ENCODE measurements at regions of chr14 and their contacts with region 1.

Region 1: DNA sequence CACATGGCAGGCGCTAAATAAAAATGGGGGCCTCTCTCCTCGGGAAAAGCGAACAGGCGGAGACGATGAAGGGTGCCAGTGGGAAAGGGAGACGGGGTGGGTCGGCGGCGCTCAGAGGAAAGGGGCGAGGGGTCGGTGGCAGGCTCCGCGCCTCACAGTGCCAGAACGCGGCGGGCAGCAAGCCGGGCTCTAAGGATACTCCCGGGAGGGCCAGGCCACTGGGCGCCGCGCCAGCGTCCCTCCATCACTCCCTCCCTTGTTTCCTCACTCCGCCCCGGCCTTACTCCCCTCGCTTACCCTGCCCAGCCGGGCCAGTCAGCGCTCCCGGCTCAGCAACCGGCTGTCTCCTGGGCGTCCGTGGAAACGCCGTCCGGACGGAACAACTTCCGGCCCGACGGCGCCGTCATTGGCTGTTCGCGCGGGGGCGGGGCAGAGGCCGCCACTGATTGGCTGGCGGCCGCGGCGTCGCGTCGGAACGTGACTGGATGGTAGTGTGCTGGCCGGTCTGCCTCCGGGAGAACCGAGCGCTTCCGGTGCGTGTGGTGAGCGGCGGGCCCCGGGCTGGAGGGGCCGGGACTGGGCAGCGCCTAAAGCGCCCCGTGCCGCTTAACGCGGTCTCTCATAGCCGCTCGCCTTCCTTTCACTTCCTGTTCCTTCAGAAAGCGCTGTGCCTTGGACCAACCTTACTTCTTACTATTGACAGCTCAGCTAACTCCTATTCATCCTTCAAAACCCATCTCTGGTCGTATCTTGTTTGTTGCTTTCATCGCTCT is 53.0 kb downstream of the SLC25A47 start:
- DNase-seq: peak; percentile 96
- H3K4me3 Mint-ChIP-seq: peak within 1 kb of the TSS; percentile 98
- H3K27ac Mint-ChIP-seq: peak within 1 kb of the TSS; percentile 100
- H3K4me1 Mint-ChIP-seq: peaks cover 47% of the 10 kb centered on the region
- H3K27me3 Mint-ChIP-seq: peaks cover 1% of the 10 kb centered on the region

Region 2: DNA sequence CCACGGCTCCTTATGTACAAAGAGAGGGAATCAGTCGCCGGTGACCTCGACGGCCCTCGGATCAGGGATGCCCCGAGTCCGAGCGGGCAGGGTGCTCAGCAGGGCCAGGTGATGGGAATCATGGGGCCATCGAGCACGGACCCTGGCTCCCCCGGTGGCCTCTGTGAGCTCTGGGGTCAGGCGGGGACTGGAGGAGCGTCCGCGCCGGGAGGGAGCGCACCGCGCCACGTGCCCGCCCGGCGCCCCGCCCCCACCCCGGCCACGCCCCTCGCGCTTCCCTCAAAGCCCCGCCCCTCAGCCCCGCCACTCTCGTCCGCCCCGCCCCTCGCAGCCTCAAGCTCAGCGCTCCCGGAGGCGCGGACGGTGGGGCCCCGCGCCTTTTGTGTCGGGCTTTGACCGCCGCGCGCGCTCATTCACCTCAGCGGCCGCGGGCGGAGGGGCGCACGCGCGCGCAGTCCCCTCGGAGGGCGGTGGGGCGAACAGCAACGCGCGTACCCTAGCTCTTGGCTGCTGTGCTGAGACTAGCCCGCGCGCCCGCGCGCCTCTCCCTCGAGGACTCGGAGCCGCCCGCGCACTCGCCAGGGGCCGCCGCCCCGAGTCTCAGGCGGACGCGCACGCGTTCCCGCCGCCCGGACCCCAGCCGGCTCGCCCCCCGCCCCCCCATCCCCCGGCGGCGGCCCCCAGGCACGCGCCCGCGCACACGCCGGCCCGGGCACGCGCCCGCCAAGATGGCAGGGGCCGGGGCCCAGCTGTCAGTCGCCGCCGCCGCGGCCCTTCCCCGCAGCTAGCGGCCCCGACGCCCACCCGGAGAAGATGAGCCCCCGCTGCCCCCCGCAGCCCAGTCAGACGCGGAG is 404.8 kb before region 1 on chr14:
- CTCF ChIA-PET with region 1: no interaction called
- POLR2A ChIA-PET with region 1: interaction called, 3 read pairs
- intact Hi-C with region 1: loop called (anchors 10 kb)
- DNase-seq: peak; percentile 89
- H3K4me3 Mint-ChIP-seq: peak overlapping the region; percentile 51
- H3K27ac Mint-ChIP-seq: no peak overlapping the region
- H3K4me1 Mint-ChIP-seq: peaks cover 20% of the 10 kb centered on the region
- H3K27me3 Mint-ChIP-seq: peaks cover 24% of the 10 kb centered on the region

Region 3: DNA sequence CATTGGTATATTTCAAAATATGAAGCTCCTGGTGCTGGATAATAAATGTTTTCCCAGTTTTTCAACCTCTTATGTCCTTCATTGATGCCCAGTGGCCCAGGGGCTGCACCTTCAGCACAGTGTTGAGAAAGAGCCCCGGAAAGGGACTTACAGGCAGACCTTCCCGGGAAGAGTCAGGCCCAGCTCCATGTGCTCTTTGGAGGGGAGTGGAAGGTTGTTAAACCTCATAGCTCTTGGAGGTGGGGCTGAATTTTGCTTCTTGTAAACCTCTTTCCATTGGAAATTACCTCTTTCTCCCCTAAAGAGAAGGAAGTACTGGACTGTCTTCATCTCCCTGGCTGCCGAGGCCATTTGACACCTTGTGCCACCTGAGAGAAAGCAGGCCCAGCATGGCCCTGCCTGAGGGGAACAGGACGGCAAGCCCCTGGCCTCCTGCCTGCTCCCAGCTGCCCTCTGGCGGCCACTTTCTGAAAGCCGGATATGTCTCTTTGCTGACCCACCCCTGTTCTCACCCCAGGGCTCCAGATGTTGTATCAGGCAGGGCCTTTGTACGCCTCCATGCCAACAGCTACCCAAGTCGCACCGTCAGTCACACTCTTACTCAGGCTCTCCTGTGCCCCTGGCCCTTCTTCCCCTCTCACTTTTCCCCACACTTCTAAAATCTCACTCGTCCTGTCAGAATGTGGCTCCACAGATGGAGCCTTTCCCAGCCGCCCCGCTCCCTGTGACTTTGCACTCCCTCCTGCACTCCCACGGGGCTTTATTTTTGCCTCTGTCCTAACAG is 267.9 kb before region 1 on chr14:
- CTCF ChIA-PET with region 1: interaction called, 3 read pairs
- POLR2A ChIA-PET with region 1: no interaction called
- intact Hi-C with region 1: loop called (anchors 5 kb)
- DNase-seq: peak; percentile 92
- H3K4me3 Mint-ChIP-seq: peak overlapping the region; percentile 4
- H3K27ac Mint-ChIP-seq: peak overlapping the region; percentile 90
- H3K4me1 Mint-ChIP-seq: peaks cover 62% of the 10 kb centered on the region
- H3K27me3 Mint-ChIP-seq: no peaks in the 10 kb centered on the region

Region 4: GRCh38 chr14:100306420-100307219 is 69.5 kb before region 1 on chr14 and contains the start of gene SLC25A29:
- CTCF ChIA-PET with region 1: interaction called, 14 read pairs
- POLR2A ChIA-PET with region 1: no interaction called
- intact Hi-C with region 1: loop called (anchors 1 kb)
- DNase-seq: peak; percentile 79
- H3K4me3 Mint-ChIP-seq: peak within 1 kb of the TSS; percentile 70
- H3K27ac Mint-ChIP-seq: no peak within 1 kb of the TSS
- H3K4me1 Mint-ChIP-seq: peaks cover 10% of the 10 kb centered on the region
- H3K27me3 Mint-ChIP-seq: peaks cover 6% of the 10 kb centered on the region
- total RNA-seq, gene SLC25A29: 14.9 to 15.7 TPM

Region 5: GRCh38 chr14:100402631-100403030 is 26.5 kb after region 1 on chr14:
- CTCF ChIA-PET with region 1: no interaction called
- POLR2A ChIA-PET with region 1: no interaction called
- intact Hi-C with region 1: no loop called
- DNase-seq: no peak
- H3K4me3 Mint-ChIP-seq: no peak overlapping the region
- H3K27ac Mint-ChIP-seq: no peak overlapping the region
- H3K4me1 Mint-ChIP-seq: peaks cover 27% of the 10 kb centered on the region
- H3K27me3 Mint-ChIP-seq: no peaks in the 10 kb centered on the region

Region 6: GRCh38 chr14:100446572-100446971 is 70.4 kb after region 1 on chr14:
- CTCF ChIA-PET with region 1: no interaction called
- POLR2A ChIA-PET with region 1: no interaction called
- intact Hi-C with region 1: no loop called
- DNase-seq: peak; percentile 52
- H3K4me3 Mint-ChIP-seq: no peak overlapping the region
- H3K27ac Mint-ChIP-seq: no peak overlapping the region
- H3K4me1 Mint-ChIP-seq: peaks cover 11% of the 10 kb centered on the region
- H3K27me3 Mint-ChIP-seq: no peaks in the 10 kb centered on the region

Region 7: DNA sequence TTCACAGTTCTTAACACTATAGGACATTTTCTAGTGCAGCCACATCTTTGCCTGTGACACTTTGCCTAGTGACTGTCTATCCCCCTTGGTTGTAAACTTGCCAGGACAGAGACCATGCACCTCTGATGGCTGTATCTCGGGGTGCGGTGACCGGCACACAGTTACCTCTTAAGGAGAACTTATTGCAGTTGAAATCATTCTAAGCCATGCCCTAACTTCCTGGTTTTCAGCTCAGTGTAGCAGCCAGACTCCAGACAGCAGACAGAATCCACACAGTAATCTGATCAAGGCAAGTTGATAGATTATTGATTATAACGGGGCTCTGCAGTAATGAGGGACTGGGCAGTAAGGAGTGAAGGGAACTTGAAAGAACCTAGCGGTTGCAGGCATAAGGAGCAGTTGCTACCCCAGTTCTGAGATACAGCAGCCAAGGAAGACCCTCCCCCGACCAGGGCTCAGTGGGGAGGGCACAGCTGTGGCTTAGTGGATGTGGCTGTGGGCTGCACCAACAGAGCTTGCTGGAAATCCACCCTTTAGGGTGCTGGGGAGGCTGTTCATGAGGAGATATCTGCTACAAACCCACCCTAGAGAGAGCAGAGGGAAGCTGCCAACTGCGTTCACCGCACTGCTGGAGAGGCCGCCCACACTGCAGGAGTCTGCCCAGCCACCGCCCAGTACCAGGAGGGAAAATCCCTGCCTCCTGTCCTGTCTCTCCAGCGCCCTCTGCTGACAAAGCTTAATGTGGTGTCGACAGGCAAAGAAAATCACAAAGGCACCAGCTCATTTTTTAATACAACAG is 269.2 kb after region 1 on chr14:
- CTCF ChIA-PET with region 1: interaction called, 154 read pairs
- POLR2A ChIA-PET with region 1: no interaction called
- intact Hi-C with region 1: loop called (anchors 2 kb)
- DNase-seq: peak; percentile 92
- H3K4me3 Mint-ChIP-seq: no peak overlapping the region
- H3K27ac Mint-ChIP-seq: no peak overlapping the region
- H3K4me1 Mint-ChIP-seq: peaks cover 41% of the 10 kb centered on the region
- H3K27me3 Mint-ChIP-seq: no peaks in the 10 kb centered on the region

Region 8: DNA sequence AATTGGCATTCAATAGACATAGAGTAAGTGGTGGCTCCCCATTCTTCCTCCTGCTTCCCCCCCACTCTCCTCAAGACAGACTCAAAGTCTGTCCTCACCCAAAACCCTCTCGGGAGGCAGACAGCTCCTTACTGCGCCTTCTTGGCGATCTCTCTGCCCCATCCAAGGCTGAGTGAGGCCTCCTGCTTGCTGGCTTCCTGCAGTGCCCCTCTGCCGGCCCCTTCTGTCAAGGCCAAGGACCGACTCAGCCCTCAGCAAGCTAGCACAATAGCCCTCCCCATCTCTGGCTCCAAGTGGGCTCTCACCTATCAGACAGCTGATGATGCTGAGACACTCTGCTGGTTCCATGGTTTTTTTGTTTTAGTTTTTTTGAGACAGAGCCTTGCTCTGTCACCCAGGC is 288.1 kb after region 1 on chr14:
- CTCF ChIA-PET with region 1: no interaction called
- POLR2A ChIA-PET with region 1: no interaction called
- intact Hi-C with region 1: no loop called
- DNase-seq: no peak
- H3K4me3 Mint-ChIP-seq: no peak overlapping the region
- H3K27ac Mint-ChIP-seq: no peak overlapping the region
- H3K4me1 Mint-ChIP-seq: peaks cover 2% of the 10 kb centered on the region
- H3K27me3 Mint-ChIP-seq: peaks cover 15% of the 10 kb centered on the region

Region 9: DNA sequence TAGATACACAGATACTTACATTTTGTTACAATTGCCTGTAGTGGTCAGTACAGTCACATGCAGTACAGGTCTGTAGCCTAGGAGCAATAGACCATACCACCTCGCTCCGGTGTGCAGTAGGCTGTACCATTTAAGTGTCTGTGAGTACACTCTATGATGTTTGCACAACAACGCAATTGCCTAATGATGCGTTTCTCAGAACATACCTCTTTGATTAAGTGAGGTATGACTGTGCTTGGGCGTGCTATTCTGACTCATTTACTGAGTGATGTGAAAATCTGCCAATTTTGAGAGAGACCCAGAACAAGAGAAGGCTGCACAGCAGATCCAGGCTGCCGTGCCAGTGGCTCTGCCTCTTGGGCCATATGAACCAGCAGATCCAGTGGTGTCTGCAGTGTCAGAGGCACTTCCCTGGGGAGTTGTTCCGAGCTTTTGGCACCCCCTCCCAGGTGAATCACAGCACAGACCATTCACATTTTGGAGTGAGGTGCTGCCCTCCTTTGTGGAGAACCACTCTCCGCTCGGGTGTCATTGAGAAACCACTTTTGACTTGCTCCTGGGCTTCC is 371.0 kb after region 1 on chr14:
- CTCF ChIA-PET with region 1: no interaction called
- POLR2A ChIA-PET with region 1: no interaction called
- intact Hi-C with region 1: no loop called
- DNase-seq: peak; percentile 20
- H3K4me3 Mint-ChIP-seq: no peak overlapping the region
- H3K27ac Mint-ChIP-seq: no peak overlapping the region
- H3K4me1 Mint-ChIP-seq: no peaks in the 10 kb centered on the region
- H3K27me3 Mint-ChIP-seq: peaks cover 4% of the 10 kb centered on the region

Region 10: GRCh38 chr14:102086972-102087761 is 1711.0 kb after region 1 on chr14 and contains the start of gene HSP90AA1:
- CTCF ChIA-PET with region 1: no interaction called
- POLR2A ChIA-PET with region 1: no interaction called
- intact Hi-C with region 1: loop called (anchors 10 kb)
- DNase-seq: peak; percentile 96
- H3K4me3 Mint-ChIP-seq: peak within 1 kb of the TSS; percentile 84
- H3K27ac Mint-ChIP-seq: peak within 1 kb of the TSS; percentile 94
- H3K4me1 Mint-ChIP-seq: peaks cover 43% of the 10 kb centered on the region
- H3K27me3 Mint-ChIP-seq: no peaks in the 10 kb centered on the region
- total RNA-seq, gene HSP90AA1: 1,107 to 1,148 TPM

Measured in activated CD4-positive, alpha-beta memory T cell treated with anti-CD3 and anti-CD28 coated beads for 36 hours (primary cell).